ENCODE measurements at regions of chr2 and their contacts with region 1.

Region 1: GRCh38 chr2:219206442-219207253 is at the start of gene ZFAND2B:
- DNase-seq: peak; percentile 52
- ATAC-seq: peak; percentile 99
- H3K4me3 ChIP-seq: peak within 1 kb of the TSS; percentile 50
- H3K27ac ChIP-seq: peak within 1 kb of the TSS; percentile 72
- H3K4me1 ChIP-seq: peaks cover 8% of the 10 kb centered on the region
- H3K27me3 ChIP-seq: no peaks in the 10 kb centered on the region
- CTCF ChIP-seq: peak in 2 of 3 experiments; percentile 9 to 14; a peak in 1 of 6 replicates
- EP300 ChIP-seq: no peak
- POLR2A ChIP-seq: peak; percentile 99
- RAD21 ChIP-seq: no peak
- polyA plus RNA-seq, gene ZFAND2B: 5.4 to 10.7 TPM

Region 2: GRCh38 chr2:219125225-219125885 is 81.3 kb before region 1 on chr2:
- CTCF ChIA-PET with region 1: no interaction called
- POLR2A ChIA-PET with region 1: no interaction called
- RAD21 ChIA-PET with region 1: no interaction called
- SMC1A ChIA-PET with region 1: no interaction called
- in situ Hi-C with region 1: no loop called
- intact Hi-C with region 1: no loop called
- DNase-seq: no peak
- ATAC-seq: no peak
- H3K4me3 ChIP-seq: no peak overlapping the region
- H3K27ac ChIP-seq: no peak overlapping the region
- H3K4me1 ChIP-seq: no peaks in the 10 kb centered on the region
- H3K27me3 ChIP-seq: no peaks in the 10 kb centered on the region
- CTCF ChIP-seq: no peak
- EP300 ChIP-seq: no peak
- POLR2A ChIP-seq: no peak
- RAD21 ChIP-seq: no peak

Region 3: GRCh38 chr2:219245148-219245898 is 38.7 kb after region 1 on chr2 and contains the starts of genes GLB1L and STK16:
- CTCF ChIA-PET with region 1: no interaction called
- POLR2A ChIA-PET with region 1: interaction called, 16 read pairs
- RAD21 ChIA-PET with region 1: interaction called, 14 read pairs
- SMC1A ChIA-PET with region 1: interaction called, 12 read pairs
- in situ Hi-C with region 1: no loop called
- intact Hi-C with region 1: no loop called
- DNase-seq: peak; percentile 75
- ATAC-seq: peak; percentile 83
- H3K4me3 ChIP-seq: peak within 1 kb of the TSS; percentile 90
- H3K27ac ChIP-seq: peak within 1 kb of the TSS; percentile 70
- H3K4me1 ChIP-seq: peaks cover 44% of the 10 kb centered on the region
- H3K27me3 ChIP-seq: no peaks in the 10 kb centered on the region
- CTCF ChIP-seq: no peak
- EP300 ChIP-seq: no peak
- POLR2A ChIP-seq: peak; percentile 96
- RAD21 ChIP-seq: no peak
- polyA plus RNA-seq, gene GLB1L: 0.29 to 1.0 TPM
- polyA plus RNA-seq, gene STK16: 8.4 to 9.0 TPM

Region 4: DNA sequence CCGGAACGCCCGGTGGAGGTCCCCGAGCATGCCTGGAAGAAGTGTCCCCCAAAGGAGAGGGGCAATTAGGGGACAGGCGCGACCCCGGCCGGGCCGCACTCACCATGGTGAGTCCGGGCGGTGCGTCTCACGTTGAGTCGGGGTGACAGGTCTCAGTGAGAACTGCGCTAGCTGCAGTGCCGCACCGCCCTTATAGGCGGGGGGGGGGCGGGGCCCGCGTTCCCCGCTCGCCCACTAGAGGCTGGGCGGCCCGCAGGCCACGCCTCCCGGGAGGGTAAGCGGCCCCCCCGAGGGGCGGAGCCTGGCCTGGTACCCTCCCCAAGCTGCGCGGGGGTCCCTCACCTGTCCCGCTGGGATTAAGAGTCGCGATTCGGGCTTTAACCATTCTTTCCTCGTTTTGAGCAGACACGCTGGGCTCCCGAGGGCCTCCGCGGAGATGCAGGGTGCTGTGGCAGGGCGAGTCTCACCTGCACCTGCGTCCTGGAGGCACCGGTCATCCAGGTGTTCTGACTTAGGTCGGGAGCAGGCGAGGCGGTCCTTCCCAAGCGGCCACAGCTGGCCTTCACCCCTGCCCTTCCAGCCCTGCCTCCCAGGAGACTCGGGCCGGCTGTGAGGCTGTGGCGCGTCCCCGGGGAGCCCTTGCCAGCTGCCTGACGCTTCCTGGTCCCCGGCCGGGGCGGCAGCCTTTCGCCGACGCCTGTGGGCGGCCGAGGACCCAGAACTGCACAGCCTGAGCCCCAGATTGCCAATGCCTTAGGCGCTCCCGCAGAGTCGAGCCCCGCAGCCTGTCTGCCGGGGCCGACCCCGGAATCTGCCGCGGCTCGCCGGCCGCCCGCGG is 47.3 kb after region 1 on chr2 and contains the start of gene TUBA4A:
- CTCF ChIA-PET with region 1: interaction called, 4 read pairs
- POLR2A ChIA-PET with region 1: interaction called, 14 read pairs
- RAD21 ChIA-PET with region 1: interaction called, 14 read pairs
- SMC1A ChIA-PET with region 1: interaction called, 12 read pairs
- in situ Hi-C with region 1: no loop called
- intact Hi-C with region 1: no loop called
- DNase-seq: no peak
- ATAC-seq: peak; percentile 83
- H3K4me3 ChIP-seq: peak within 1 kb of the TSS; percentile 86
- H3K27ac ChIP-seq: peak within 1 kb of the TSS; percentile 77
- H3K4me1 ChIP-seq: peaks cover 22% of the 10 kb centered on the region
- H3K27me3 ChIP-seq: no peaks in the 10 kb centered on the region
- CTCF ChIP-seq: no peak
- EP300 ChIP-seq: 0 out of 4 replicates have a peak, but pooled peaks of 1 of the 2 experiments have one; percentile 23
- POLR2A ChIP-seq: peak; percentile 97
- RAD21 ChIP-seq: no peak
- polyA plus RNA-seq, gene TUBA4A: 58.2 to 88.6 TPM

Region 5: GRCh38 chr2:219552382-219553167 is 345.9 kb after region 1 on chr2:
- CTCF ChIA-PET with region 1: no interaction called
- POLR2A ChIA-PET with region 1: no interaction called
- RAD21 ChIA-PET with region 1: no interaction called
- SMC1A ChIA-PET with region 1: no interaction called
- in situ Hi-C with region 1: no loop called
- intact Hi-C with region 1: no loop called
- DNase-seq: no peak
- ATAC-seq: peak; percentile 94
- H3K4me3 ChIP-seq: peak overlapping the region; percentile 57; the same call in 1 of the 2 replicates
- H3K27ac ChIP-seq: no peak overlapping the region
- H3K4me1 ChIP-seq: no peaks in the 10 kb centered on the region; the same call in 1 of the 2 replicates
- H3K27me3 ChIP-seq: peaks cover 3 to 8% of the 10 kb centered on the region in 2 experiments
- CTCF ChIP-seq: no peak
- EP300 ChIP-seq: no peak
- POLR2A ChIP-seq: no peak
- RAD21 ChIP-seq: no peak

Region 6: GRCh38 chr2:219633276-219634065 is 426.8 kb after region 1 on chr2:
- CTCF ChIA-PET with region 1: no interaction called
- POLR2A ChIA-PET with region 1: no interaction called
- RAD21 ChIA-PET with region 1: no interaction called
- SMC1A ChIA-PET with region 1: no interaction called
- in situ Hi-C with region 1: no loop called
- intact Hi-C with region 1: no loop called
- DNase-seq: no peak
- ATAC-seq: no peak
- H3K4me3 ChIP-seq: no peak overlapping the region
- H3K27ac ChIP-seq: no peak overlapping the region
- H3K4me1 ChIP-seq: no peaks in the 10 kb centered on the region
- H3K27me3 ChIP-seq: no peaks in the 10 kb centered on the region; a peak in 3 of 4 replicates
- CTCF ChIP-seq: no peak
- EP300 ChIP-seq: no peak
- POLR2A ChIP-seq: no peak
- RAD21 ChIP-seq: no peak

Measured in GM12878 (cell line).